HepG2 (cell line): ENCODE measurements at regions of chr6 and their contacts with region 1.

Region 1: GRCh38 chr6:163427498-163428254 is 13.2 kb downstream of the QKI start:
- DNase-seq: peak; percentile 61
- ATAC-seq: peak; percentile 50
- H3K4me3 ChIP-seq: no peak overlapping the region
- H3K27ac ChIP-seq: no peak overlapping the region
- H3K4me1 ChIP-seq: peaks cover 25% of the 10 kb centered on the region
- H3K27me3 ChIP-seq: no peaks in the 10 kb centered on the region
- CTCF ChIP-seq: peak; percentile 55
- EP300 ChIP-seq: no peak
- POLR2A ChIP-seq: no peak
- RAD21 ChIP-seq: peak; percentile 36; the same call in 1 of the 2 replicates

Region 2: DNA sequence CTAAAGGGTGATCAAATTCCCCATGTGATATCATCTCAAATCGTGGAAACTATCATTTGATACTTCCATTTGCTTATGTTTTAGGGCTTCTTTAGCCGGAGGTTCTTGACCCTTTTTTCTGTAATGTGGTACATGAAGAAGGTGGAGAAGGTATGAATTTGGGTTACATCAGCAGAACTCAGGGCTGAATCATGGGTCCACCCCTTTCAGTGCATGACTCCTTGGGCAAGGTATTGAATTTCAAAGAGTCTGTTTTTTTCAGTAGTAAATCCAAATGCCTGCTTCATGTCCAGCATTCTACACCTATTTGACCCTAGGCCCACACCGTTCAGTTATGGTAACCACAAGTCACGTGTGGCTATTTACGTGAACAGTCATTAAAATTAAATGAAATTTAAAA is 43.8 kb before region 1 on chr6:
- CTCF ChIA-PET with region 1: no interaction called
- POLR2A ChIA-PET with region 1: no interaction called
- in situ Hi-C with region 1: no loop called
- intact Hi-C with region 1: no loop called
- DNase-seq: no peak
- ATAC-seq: no peak
- H3K4me3 ChIP-seq: no peak overlapping the region
- H3K27ac ChIP-seq: no peak overlapping the region
- H3K4me1 ChIP-seq: peaks cover 50% of the 10 kb centered on the region
- H3K27me3 ChIP-seq: no peaks in the 10 kb centered on the region
- CTCF ChIP-seq: no peak
- EP300 ChIP-seq: no peak
- POLR2A ChIP-seq: no peak
- RAD21 ChIP-seq: no peak

Region 3: GRCh38 chr6:163438940-163439335 is 11.3 kb after region 1 on chr6:
- CTCF ChIA-PET with region 1: no interaction called
- POLR2A ChIA-PET with region 1: interaction called, 3 read pairs
- in situ Hi-C with region 1: no loop called
- intact Hi-C with region 1: loop called (anchors 1 kb)
- DNase-seq: peak; percentile 49
- ATAC-seq: peak; percentile 67
- H3K4me3 ChIP-seq: no peak overlapping the region
- H3K27ac ChIP-seq: no peak overlapping the region
- H3K4me1 ChIP-seq: peaks cover 38% of the 10 kb centered on the region
- H3K27me3 ChIP-seq: no peaks in the 10 kb centered on the region
- CTCF ChIP-seq: no peak
- EP300 ChIP-seq: no peak
- POLR2A ChIP-seq: no peak
- RAD21 ChIP-seq: no peak

Region 4: DNA sequence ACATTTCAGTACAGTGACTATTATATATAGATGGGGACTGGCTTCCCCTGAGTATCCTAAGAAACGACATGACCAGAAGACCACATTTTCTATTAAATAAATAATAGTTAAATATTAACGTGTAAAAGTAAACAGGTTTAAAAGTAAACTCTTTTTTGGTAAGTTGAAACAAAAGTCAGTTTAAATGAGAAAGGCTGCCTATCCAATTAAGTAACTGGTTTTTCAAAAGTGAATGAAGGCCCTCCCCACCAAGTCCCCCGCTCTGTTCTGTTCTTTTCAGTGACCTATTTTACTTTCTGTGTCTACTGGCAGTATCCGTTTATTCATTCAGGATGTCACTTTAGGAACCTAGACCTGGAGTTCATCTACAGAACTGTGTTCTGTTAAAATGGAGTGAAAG is 18.9 kb after region 1 on chr6:
- CTCF ChIA-PET with region 1: no interaction called
- POLR2A ChIA-PET with region 1: interaction called, 3 read pairs
- in situ Hi-C with region 1: no loop called
- intact Hi-C with region 1: loop called (anchors 2 kb)
- DNase-seq: peak; percentile 30
- ATAC-seq: peak; percentile 64
- H3K4me3 ChIP-seq: peak overlapping the region in 1 of 3 experiments; percentile 20; a peak in 2 of 6 replicates
- H3K27ac ChIP-seq: peak overlapping the region; percentile 45
- H3K4me1 ChIP-seq: peaks cover 69% of the 10 kb centered on the region
- H3K27me3 ChIP-seq: no peaks in the 10 kb centered on the region
- CTCF ChIP-seq: no peak
- EP300 ChIP-seq: no peak
- POLR2A ChIP-seq: no peak
- RAD21 ChIP-seq: no peak

Region 5: GRCh38 chr6:163501026-163501425 is 73.3 kb after region 1 on chr6:
- CTCF ChIA-PET with region 1: no interaction called
- POLR2A ChIA-PET with region 1: no interaction called
- in situ Hi-C with region 1: no loop called
- intact Hi-C with region 1: no loop called
- DNase-seq: no peak
- ATAC-seq: no peak
- H3K4me3 ChIP-seq: no peak overlapping the region
- H3K27ac ChIP-seq: no peak overlapping the region
- H3K4me1 ChIP-seq: no peaks in the 10 kb centered on the region
- H3K27me3 ChIP-seq: no peaks in the 10 kb centered on the region
- CTCF ChIP-seq: no peak
- EP300 ChIP-seq: no peak
- POLR2A ChIP-seq: no peak
- RAD21 ChIP-seq: no peak

Region 6: DNA sequence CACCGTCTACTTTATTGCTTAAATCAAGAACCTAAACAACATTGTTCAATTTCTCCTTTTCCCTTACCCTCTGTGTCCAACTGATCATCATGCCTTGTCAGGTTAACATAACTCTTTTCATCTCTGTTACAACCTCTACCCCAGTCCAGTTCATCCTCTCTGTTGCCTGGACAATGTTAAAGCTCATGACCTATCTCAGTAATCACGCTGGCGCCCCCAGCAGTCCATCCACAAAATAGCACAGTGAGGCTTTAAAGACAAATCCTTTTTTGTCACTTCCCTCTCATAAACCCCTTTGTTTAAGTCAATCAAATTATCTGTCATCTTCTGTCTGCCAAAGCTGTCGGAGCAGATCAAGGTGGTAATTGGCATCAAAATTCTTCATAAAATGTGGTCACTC is 127.0 kb after region 1 on chr6:
- CTCF ChIA-PET with region 1: interaction called, 5 read pairs
- POLR2A ChIA-PET with region 1: no interaction called
- in situ Hi-C with region 1: loop called (anchors 10 kb)
- intact Hi-C with region 1: loop called (anchors 1 kb)
- DNase-seq: peak; percentile 66
- ATAC-seq: peak; percentile 84
- H3K4me3 ChIP-seq: no peak overlapping the region
- H3K27ac ChIP-seq: no peak overlapping the region
- H3K4me1 ChIP-seq: no peaks in the 10 kb centered on the region
- H3K27me3 ChIP-seq: no peaks in the 10 kb centered on the region
- CTCF ChIP-seq: peak; percentile 81
- EP300 ChIP-seq: no peak
- POLR2A ChIP-seq: no peak
- RAD21 ChIP-seq: peak; percentile 63

Region 7: GRCh38 chr6:163565140-163565539 is 137.5 kb after region 1 on chr6:
- CTCF ChIA-PET with region 1: no interaction called
- POLR2A ChIA-PET with region 1: no interaction called
- in situ Hi-C with region 1: loop called (anchors 10 kb)
- intact Hi-C with region 1: no loop called
- DNase-seq: no peak
- ATAC-seq: no peak
- H3K4me3 ChIP-seq: no peak overlapping the region
- H3K27ac ChIP-seq: no peak overlapping the region
- H3K4me1 ChIP-seq: no peaks in the 10 kb centered on the region
- H3K27me3 ChIP-seq: no peaks in the 10 kb centered on the region
- CTCF ChIP-seq: no peak
- EP300 ChIP-seq: no peak
- POLR2A ChIP-seq: no peak
- RAD21 ChIP-seq: no peak

Region 8: DNA sequence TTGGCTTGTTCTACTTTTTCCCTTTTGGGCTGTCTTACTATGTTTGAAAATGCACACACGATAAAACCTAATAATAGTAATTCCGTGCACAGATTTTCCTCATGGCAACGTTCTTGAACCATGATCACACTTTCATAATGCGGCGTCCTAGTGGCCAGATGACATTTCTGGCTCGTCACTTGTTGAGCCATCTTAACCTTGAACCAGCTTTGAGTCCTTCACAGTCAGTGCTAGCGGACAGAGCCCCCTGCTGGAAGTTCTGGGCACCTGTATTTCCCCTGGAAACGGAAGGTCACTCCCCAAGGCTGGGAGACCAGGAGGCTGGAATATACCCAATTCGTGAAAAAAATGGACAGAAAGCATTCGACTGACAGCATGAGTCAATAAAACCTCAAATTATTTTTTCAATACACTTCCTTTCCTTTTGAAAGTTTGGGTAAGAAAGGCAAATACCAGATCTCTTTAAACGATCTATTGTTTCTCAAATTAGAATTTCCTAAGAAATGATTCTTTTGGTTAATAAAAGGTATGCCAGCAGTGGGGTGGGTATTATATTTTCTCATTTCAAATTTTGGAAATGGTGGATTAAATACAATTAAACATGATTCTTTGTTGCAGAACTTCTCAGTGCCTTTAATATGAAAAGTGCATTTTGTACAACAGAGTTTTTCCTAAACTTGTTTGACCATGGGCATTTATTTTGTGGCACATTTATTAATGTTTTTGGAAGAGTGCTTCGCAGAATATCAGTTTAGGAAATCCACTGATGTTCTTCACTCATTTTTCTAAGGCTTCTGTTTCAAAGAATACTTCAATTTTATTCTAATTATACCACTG is 529.1 kb after region 1 on chr6:
- CTCF ChIA-PET with region 1: interaction called, 8 read pairs
- POLR2A ChIA-PET with region 1: no interaction called
- in situ Hi-C with region 1: loop called (anchors 10 kb)
- intact Hi-C with region 1: loop called (anchors 1 kb)
- DNase-seq: peak; percentile 82
- ATAC-seq: peak; percentile 98
- H3K4me3 ChIP-seq: no peak overlapping the region
- H3K27ac ChIP-seq: no peak overlapping the region
- H3K4me1 ChIP-seq: no peaks in the 10 kb centered on the region
- H3K27me3 ChIP-seq: peaks cover 0 to 36% of the 10 kb centered on the region in 2 experiments; a peak in 2 of 5 replicates
- CTCF ChIP-seq: peak; percentile 93
- EP300 ChIP-seq: peak in 1 of 2 experiments; percentile 24; a peak in 1 of 4 replicates
- POLR2A ChIP-seq: no peak
- RAD21 ChIP-seq: peak; percentile 86

Region 9: DNA sequence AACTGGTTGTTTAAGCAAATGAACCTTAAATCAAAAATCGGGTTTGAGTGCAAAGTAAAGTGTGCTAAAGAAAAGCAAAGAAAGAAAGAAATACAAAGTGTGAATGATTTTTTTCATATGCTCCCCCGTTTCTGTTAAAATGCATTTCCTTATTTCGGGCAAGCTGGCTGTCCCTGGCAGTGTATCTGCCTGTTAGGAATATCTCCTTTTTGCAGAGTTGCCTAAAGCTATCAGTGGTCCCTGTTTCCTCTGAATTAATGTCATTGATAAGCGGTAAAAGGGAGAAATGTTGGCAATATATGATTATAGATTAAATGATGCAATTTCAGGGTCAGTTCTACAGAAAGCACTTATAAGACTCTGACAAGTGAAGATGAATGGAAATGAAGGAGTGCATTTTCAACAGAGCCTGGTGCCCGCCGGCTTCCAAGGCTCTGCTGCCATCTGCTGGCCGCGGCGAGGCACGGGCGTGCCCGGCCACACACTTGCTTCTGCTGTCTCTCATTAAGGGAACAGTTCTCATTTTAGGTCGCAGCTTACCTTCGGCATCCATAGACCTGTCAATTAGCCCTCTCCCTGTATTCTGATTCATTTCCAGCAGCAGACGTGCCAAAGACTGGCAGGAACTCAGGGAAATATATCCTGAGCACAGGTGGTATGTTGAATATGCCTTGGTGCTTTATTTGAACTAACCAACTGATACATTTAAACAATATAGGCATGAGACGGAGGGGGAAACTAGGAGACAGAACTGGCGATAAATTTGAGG is 1499.8 kb after region 1 on chr6:
- CTCF ChIA-PET with region 1: interaction called, 3 read pairs
- POLR2A ChIA-PET with region 1: no interaction called
- in situ Hi-C with region 1: no loop called
- intact Hi-C with region 1: loop called (anchors 5 kb)
- DNase-seq: peak; percentile 18
- ATAC-seq: peak; percentile 97
- H3K4me3 ChIP-seq: no peak overlapping the region
- H3K27ac ChIP-seq: no peak overlapping the region
- H3K4me1 ChIP-seq: no peaks in the 10 kb centered on the region
- H3K27me3 ChIP-seq: no peaks in the 10 kb centered on the region
- CTCF ChIP-seq: peak; percentile 94
- EP300 ChIP-seq: no peak
- POLR2A ChIP-seq: no peak
- RAD21 ChIP-seq: peak; percentile 91